ENCODE measurements at regions of chr1 and their contacts with region 1.

Region 1: GRCh38 chr1:86704458-86704971 is at the start of gene SH3GLB1:
- DNase-seq: peak; percentile 87
- H3K4me3 Mint-ChIP-seq: peak within 1 kb of the TSS; percentile 100
- H3K27ac Mint-ChIP-seq: peak within 1 kb of the TSS; percentile 97
- H3K4me1 Mint-ChIP-seq: peaks cover 47% of the 10 kb centered on the region
- H3K27me3 Mint-ChIP-seq: no peaks in the 10 kb centered on the region
- total RNA-seq, gene SH3GLB1: 63.4 and 66.8 TPM in 2 replicates

Region 2: GRCh38 chr1:85707990-85708828 is 996.3 kb before region 1 on chr1 and contains the start of gene ZNHIT6:
- intact Hi-C with region 1: loop called (anchors 10 kb)
- DNase-seq: peak; percentile 82
- H3K4me3 Mint-ChIP-seq: no peak within 1 kb of the TSS
- H3K27ac Mint-ChIP-seq: no peak within 1 kb of the TSS
- H3K4me1 Mint-ChIP-seq: peaks cover 11% of the 10 kb centered on the region
- H3K27me3 Mint-ChIP-seq: no peaks in the 10 kb centered on the region
- total RNA-seq, gene ZNHIT6: 24.6 and 26.3 TPM in 2 replicates

Region 3: DNA sequence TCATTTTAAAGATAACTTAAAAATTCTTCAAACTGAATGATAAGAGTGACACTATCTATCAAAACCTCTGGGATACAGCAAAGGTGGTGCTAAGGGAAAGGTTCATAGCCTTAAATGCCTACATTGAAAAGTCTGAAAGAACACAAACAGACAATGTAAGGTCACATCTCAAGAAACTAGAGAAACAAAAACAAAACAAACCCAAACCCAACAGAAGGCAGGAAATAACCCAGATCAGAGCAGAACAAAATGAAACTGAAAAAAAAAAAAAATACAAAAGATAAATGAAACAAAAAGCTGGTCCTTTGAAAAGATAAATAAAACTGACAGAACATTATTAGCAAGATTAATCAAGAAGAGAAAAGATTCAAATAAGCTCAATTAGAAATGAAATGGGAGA is 315.2 kb before region 1 on chr1:
- intact Hi-C with region 1: loop called (anchors 2 kb)
- DNase-seq: no peak
- H3K4me3 Mint-ChIP-seq: peak overlapping the region; percentile 83
- H3K27ac Mint-ChIP-seq: peak overlapping the region; percentile 82
- H3K4me1 Mint-ChIP-seq: peaks cover 54% of the 10 kb centered on the region
- H3K27me3 Mint-ChIP-seq: no peaks in the 10 kb centered on the region

Region 4: GRCh38 chr1:86499987-86500593 is 204.4 kb before region 1 on chr1:
- intact Hi-C with region 1: loop called (anchors 1 kb)
- DNase-seq: no peak
- H3K4me3 Mint-ChIP-seq: no peak overlapping the region
- H3K27ac Mint-ChIP-seq: no peak overlapping the region
- H3K4me1 Mint-ChIP-seq: peaks cover 16% of the 10 kb centered on the region
- H3K27me3 Mint-ChIP-seq: peaks cover 38% of the 10 kb centered on the region

Region 5: GRCh38 chr1:86774305-86775295 is 70.1 kb after region 1 on chr1:
- intact Hi-C with region 1: loop called (anchors 1 kb)
- DNase-seq: no peak
- H3K4me3 Mint-ChIP-seq: no peak overlapping the region
- H3K27ac Mint-ChIP-seq: no peak overlapping the region
- H3K4me1 Mint-ChIP-seq: peaks cover 21% of the 10 kb centered on the region
- H3K27me3 Mint-ChIP-seq: no peaks in the 10 kb centered on the region

Region 6: GRCh38 chr1:88683541-88684481 is 1979.3 kb after region 1 on chr1 and contains the start of gene PKN2:
- intact Hi-C with region 1: loop called (anchors 5 kb)
- DNase-seq: peak; percentile 97
- H3K4me3 Mint-ChIP-seq: peak within 1 kb of the TSS; percentile 100
- H3K27ac Mint-ChIP-seq: peak within 1 kb of the TSS; percentile 100
- H3K4me1 Mint-ChIP-seq: peaks cover 35% of the 10 kb centered on the region
- H3K27me3 Mint-ChIP-seq: peaks cover 5% of the 10 kb centered on the region
- total RNA-seq, gene PKN2: 23.8 and 26.0 TPM in 2 replicates

Measured in activated T-helper 1 cell treated with anti-CD3 and anti-CD28 coated beads, Interleukin-12 subunit alpha, Interleukin-12 subunit beta, Interleukin-2, Interleukin-4 antibody, amounts not matched to agents 30 ng/mL and 10 ng/mL and 1 ng/mL, durations not matched to agents 14 hours and 24 hours and 36 hours (primary cell).